ENCODE measurements at regions of chrX and their contacts with region 1.

Region 1: DNA sequence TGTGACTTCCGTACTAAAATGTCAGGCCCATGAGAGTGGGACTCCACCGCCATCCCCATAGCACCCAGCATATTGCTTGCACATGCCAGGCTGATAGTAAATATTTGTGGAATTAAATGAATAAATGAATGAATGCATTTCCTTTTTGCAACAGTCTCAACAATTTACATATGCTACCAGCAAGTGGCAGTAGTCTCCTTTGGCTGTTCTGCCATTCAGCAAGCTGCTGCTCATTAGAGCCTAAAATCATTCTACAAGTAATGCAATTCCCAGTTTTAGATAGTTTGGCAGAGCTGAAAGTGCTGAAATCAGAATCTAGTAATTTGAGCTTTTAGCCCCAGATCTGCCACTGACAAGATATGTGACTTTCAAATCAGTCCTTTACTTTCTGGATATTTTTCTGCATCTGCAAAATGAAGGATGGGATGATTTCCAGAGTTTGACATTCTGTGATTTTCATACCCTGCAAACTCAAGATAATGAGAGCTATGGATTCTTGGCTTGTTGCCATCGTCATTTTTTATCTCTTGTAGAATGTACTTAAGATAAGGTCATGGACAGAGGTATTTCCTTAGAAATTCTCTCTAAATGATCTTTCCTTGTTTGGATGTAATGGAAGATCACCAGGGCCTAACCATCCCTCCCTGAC is 35.7 kb upstream of the INTS6L start:
- DNase-seq: peak; percentile 20
- H3K4me3 Mint-ChIP-seq: no peak overlapping the region
- H3K27ac Mint-ChIP-seq: no peak overlapping the region
- H3K4me1 Mint-ChIP-seq: peaks cover 3% of the 10 kb centered on the region
- H3K27me3 Mint-ChIP-seq: no peaks in the 10 kb centered on the region

Region 2: GRCh38 chrX:135572436-135572835 is 87.7 kb after region 1 on chrX:
- CTCF ChIA-PET with region 1: interaction called, 3 read pairs
- intact Hi-C with region 1: loop called (anchors 1 kb)
- DNase-seq: no peak
- H3K4me3 Mint-ChIP-seq: no peak overlapping the region
- H3K27ac Mint-ChIP-seq: no peak overlapping the region
- H3K4me1 Mint-ChIP-seq: peaks cover 6% of the 10 kb centered on the region
- H3K27me3 Mint-ChIP-seq: no peaks in the 10 kb centered on the region

Region 3: DNA sequence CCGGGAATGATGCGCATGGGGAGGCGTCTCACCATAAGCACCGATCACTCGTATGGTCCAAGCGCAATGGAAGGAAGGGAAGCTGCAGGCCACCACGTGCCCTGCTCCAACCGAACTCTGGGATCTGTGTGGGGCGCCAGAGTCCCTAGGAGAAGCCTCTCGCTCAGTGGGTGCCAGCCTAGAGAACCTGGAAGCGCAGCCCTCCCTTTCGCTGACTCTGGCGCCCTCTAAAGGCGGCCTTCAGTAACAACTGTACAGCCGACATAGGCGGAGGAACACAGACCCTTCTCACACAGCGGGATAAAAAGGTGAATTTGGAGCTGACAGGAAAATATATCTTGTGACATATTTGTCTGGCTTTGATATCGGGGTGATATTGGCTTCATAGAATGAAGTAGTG is 111.7 kb after region 1 on chrX:
- CTCF ChIA-PET with region 1: interaction called, 4 read pairs
- intact Hi-C with region 1: loop called (anchors 1 kb)
- DNase-seq: peak; percentile 58
- H3K4me3 Mint-ChIP-seq: no peak overlapping the region
- H3K27ac Mint-ChIP-seq: no peak overlapping the region
- H3K4me1 Mint-ChIP-seq: no peaks in the 10 kb centered on the region
- H3K27me3 Mint-ChIP-seq: no peaks in the 10 kb centered on the region

Region 4: DNA sequence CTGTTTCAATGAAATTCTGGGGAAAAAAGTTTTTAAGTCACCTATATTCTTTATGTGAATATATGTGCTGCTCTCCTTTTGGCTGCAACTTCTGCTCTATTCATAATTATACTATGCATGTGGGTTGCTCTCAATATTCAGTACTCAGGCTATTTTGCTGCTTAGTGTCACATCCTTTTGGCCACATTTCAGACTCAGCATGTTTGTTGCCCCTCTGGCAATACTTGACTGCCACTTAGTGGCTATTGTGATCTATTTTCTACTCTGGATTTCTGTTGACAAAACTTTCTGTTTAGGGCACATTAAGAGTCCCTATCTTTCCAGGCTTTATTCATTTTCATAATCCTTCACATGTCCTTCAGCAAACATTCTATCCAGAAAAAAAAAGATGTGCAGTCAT is 212.8 kb after region 1 on chrX:
- CTCF ChIA-PET with region 1: no interaction called
- intact Hi-C with region 1: loop called (anchors 10 kb)
- DNase-seq: no peak
- H3K4me3 Mint-ChIP-seq: no peak overlapping the region
- H3K27ac Mint-ChIP-seq: no peak overlapping the region
- H3K4me1 Mint-ChIP-seq: no peaks in the 10 kb centered on the region
- H3K27me3 Mint-ChIP-seq: no peaks in the 10 kb centered on the region

Measured in activated naive CD4-positive, alpha-beta T cell treated with anti-CD3 and anti-CD28 coated beads for 36 hours (primary cell).